Activated naive CD4-positive, alpha-beta T cell treated with anti-CD3 and anti-CD28 coated beads for 36 hours (primary cell): ENCODE measurements at regions of chr10 and their contacts with region 1.

Region 1: GRCh38 chr10:17430647-17431355 is 23.6 kb downstream of the ST8SIA6 start:
- DNase-seq: peak; percentile 79
- H3K4me3 Mint-ChIP-seq: no peak overlapping the region
- H3K27ac Mint-ChIP-seq: no peak overlapping the region
- H3K4me1 Mint-ChIP-seq: peaks cover 55% of the 10 kb centered on the region
- H3K27me3 Mint-ChIP-seq: no peaks in the 10 kb centered on the region

Region 2: GRCh38 chr10:16828114-16828568 is 602.7 kb before region 1 on chr10:
- CTCF ChIA-PET with region 1: interaction called, 5 read pairs
- intact Hi-C with region 1: loop called (anchors 1 kb)
- DNase-seq: peak; percentile 81
- H3K4me3 Mint-ChIP-seq: no peak overlapping the region
- H3K27ac Mint-ChIP-seq: no peak overlapping the region
- H3K4me1 Mint-ChIP-seq: peaks cover 4% of the 10 kb centered on the region
- H3K27me3 Mint-ChIP-seq: no peaks in the 10 kb centered on the region

Region 3: GRCh38 chr10:16891375-16892313 is 539.2 kb before region 1 on chr10:
- CTCF ChIA-PET with region 1: no interaction called
- intact Hi-C with region 1: loop called (anchors 1 kb)
- DNase-seq: peak; percentile 71
- H3K4me3 Mint-ChIP-seq: peak overlapping the region; percentile 52
- H3K27ac Mint-ChIP-seq: peak overlapping the region; percentile 69
- H3K4me1 Mint-ChIP-seq: peaks cover 8% of the 10 kb centered on the region
- H3K27me3 Mint-ChIP-seq: no peaks in the 10 kb centered on the region

Region 4: DNA sequence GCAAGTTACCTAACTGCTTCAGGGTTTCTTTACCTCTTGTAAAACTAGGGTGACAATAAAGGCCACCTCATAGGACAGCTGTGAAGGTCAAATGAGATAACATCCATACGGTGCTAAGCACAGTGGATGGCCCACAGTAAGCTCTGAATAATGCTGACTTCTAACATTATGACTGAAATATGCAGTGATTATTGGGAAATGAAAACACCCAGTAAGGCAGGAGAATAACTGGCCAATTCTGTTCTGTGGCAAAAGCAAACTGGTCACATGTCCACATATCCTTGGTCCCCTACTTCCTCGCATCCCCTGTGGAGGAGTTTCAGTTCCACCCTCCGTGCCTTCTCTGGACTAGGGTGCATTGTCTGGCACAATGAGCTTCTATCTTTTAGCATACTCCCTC is 302.5 kb before region 1 on chr10:
- CTCF ChIA-PET with region 1: no interaction called
- intact Hi-C with region 1: no loop called
- DNase-seq: no peak
- H3K4me3 Mint-ChIP-seq: no peak overlapping the region
- H3K27ac Mint-ChIP-seq: no peak overlapping the region
- H3K4me1 Mint-ChIP-seq: no peaks in the 10 kb centered on the region
- H3K27me3 Mint-ChIP-seq: no peaks in the 10 kb centered on the region

Region 5: GRCh38 chr10:17144757-17145156 is 286.0 kb before region 1 on chr10:
- CTCF ChIA-PET with region 1: no interaction called
- intact Hi-C with region 1: loop called (anchors 10 kb)
- DNase-seq: peak; percentile 84
- H3K4me3 Mint-ChIP-seq: no peak overlapping the region
- H3K27ac Mint-ChIP-seq: peak overlapping the region; percentile 47
- H3K4me1 Mint-ChIP-seq: peaks cover 28% of the 10 kb centered on the region
- H3K27me3 Mint-ChIP-seq: no peaks in the 10 kb centered on the region

Region 6: DNA sequence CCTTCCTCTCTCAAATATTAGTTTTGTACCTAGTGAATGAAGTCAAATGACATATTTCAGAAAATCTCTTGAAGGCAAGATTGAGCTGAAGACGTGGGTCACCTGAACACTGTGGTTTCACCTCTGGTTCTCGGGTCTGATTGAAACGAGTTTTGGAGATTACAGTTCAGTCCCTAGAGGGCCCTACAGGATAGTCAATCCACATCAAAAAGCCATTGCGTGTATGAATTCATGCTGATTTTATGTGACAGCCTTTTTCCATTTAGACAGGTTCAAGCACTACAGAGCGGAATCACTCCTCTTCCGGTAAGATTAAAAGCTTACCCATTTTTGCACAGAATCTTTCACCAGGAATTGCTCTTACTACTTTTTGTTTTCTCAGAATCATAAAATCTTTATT is 140.6 kb before region 1 on chr10:
- CTCF ChIA-PET with region 1: interaction called, 26 read pairs
- intact Hi-C with region 1: loop called (anchors 1 kb)
- DNase-seq: peak; percentile 55
- H3K4me3 Mint-ChIP-seq: no peak overlapping the region
- H3K27ac Mint-ChIP-seq: peak overlapping the region; percentile 68
- H3K4me1 Mint-ChIP-seq: peaks cover 12% of the 10 kb centered on the region
- H3K27me3 Mint-ChIP-seq: peaks cover 18% of the 10 kb centered on the region

Region 7: DNA sequence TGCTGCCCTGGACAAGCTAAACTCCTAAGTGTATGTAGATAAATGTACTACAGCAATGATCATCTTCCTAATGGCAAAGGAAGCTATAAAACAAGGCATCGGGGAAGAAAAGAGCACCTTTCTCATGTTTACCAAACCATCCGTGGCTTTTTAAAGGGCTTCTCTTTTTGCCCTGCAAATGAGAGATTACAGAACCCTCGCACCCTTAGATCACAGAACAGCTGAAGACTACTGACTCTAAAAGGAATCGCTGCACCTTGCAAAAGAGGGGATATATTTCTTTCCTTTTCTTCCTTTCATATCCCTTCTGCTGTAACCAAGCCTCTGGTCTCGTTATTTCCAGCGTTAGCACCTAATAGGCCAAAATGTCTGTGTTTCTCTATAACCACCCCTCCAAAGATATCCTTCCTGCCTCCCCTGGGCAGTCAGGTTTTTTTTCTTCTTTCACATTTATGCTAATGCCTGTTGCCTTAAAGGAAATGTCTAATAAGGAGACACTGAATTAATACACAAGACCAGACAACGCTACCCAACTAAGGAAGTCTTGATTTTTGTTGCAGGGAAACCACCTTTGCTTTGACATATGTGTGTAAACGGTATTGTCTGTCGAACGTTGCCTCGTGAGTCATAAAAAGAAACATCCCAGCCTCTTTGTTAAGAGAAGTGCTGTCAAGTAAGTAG is 13.0 kb after region 1 on chr10:
- CTCF ChIA-PET with region 1: interaction called, 21 read pairs
- intact Hi-C with region 1: loop called (anchors 1 kb)
- DNase-seq: peak; percentile 61
- H3K4me3 Mint-ChIP-seq: peak overlapping the region; percentile 46
- H3K27ac Mint-ChIP-seq: peak overlapping the region; percentile 28
- H3K4me1 Mint-ChIP-seq: peaks cover 16% of the 10 kb centered on the region
- H3K27me3 Mint-ChIP-seq: peaks cover 3% of the 10 kb centered on the region

Region 8: DNA sequence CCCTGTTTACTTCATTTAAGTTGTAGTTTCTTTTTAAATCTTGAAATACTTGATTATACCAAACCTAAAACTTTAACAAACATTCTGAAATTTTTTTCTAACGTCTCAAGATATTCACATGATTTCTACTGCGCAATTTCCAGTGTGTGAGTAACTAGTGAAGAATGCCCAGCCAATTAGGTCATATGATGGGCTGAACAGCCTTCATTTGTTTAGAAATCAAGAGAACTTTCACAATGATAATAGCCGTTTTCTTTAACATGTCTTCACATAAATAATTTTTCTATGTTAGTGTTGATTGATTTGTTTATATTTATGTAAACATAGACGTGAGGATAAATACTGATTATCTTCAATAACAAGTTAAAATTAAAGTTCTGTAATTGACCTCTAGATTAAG is 234.9 kb after region 1 on chr10:
- CTCF ChIA-PET with region 1: no interaction called
- intact Hi-C with region 1: no loop called
- DNase-seq: no peak
- H3K4me3 Mint-ChIP-seq: no peak overlapping the region
- H3K27ac Mint-ChIP-seq: no peak overlapping the region
- H3K4me1 Mint-ChIP-seq: peaks cover 65% of the 10 kb centered on the region
- H3K27me3 Mint-ChIP-seq: no peaks in the 10 kb centered on the region

Region 9: DNA sequence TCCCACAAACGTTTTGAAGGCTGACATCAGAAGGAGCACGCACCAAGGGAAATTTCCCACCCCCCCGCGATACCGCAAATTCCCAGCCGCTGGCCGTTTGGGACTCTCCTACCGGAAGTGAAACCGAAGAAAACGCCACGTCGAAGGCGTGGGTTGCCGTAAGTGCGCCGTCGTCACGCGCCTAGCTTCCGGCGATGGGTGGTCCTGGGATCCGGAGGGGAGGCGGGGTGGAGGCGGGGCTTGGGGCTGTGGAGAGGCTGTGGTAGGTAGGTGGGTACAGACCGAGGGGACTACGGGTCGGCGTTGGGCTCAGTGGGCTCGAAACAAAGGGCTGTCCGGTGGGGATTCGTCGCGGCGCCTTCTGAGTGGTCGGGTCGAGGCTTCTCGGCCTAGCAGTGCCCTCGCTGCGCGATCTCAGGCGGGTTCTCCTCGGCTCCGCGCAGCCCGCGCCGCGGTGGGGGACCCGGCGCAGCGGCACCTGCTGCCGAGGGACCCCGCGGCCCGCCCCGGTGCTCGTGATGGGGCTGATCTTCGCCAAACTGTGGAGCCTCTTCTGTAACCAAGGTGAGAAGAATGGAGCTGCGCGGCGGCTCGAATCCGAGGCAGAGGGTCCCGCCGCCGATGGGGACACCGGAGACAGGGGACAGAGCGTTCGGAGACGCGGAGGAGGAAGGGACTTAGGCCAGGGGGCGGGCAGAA is 1228.5 kb after region 1 on chr10 and contains the start of gene ARL5B:
- CTCF ChIA-PET with region 1: no interaction called
- intact Hi-C with region 1: loop called (anchors 10 kb)
- DNase-seq: peak; percentile 97
- H3K4me3 Mint-ChIP-seq: peak within 1 kb of the TSS; percentile 93
- H3K27ac Mint-ChIP-seq: peak within 1 kb of the TSS; percentile 98
- H3K4me1 Mint-ChIP-seq: peaks cover 36% of the 10 kb centered on the region
- H3K27me3 Mint-ChIP-seq: no peaks in the 10 kb centered on the region
- total RNA-seq, gene ARL5B: 13.8 to 14.1 TPM